ENCODE measurements at regions of chr2 and their contacts with region 1.

Region 1: GRCh38 chr2:19140596-19141219 is 217.7 kb downstream of the OSR1 start:
- DNase-seq: peak; percentile 92 to 98
- ATAC-seq: peak; percentile 98
- H3K4me3 ChIP-seq: no peak overlapping the region
- H3K27ac ChIP-seq: peak overlapping the region; percentile 77 to 91
- H3K4me1 ChIP-seq: peaks cover 59% of the 10 kb centered on the region
- CTCF ChIP-seq: no peak
- EP300 ChIP-seq: peak; percentile 96 to 97
- POLR2A ChIP-seq: no peak
- RAD21 ChIP-seq: peak; percentile 52 to 85

Region 2: DNA sequence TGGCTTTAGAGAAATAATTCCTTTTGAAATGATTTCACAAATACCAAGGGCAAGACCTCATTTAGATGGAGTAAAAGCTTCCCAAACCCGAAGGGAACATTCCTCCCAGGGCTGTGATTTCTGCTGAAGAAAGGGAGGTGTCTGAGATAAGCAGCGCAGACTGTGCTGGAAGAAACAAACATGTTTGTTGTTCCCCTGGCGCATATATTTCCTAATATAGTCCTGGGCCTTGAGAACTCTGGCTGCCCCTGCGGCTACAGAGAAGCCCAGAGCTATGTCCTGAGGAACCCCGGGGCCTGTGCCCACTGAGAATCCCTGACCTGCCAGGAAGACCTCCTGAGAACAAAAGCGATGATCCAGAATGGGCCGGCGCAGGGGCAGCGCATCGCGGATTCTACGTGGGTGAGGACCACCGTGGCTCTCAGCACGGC is 178.7 kb before region 1 on chr2:
- CTCF ChIA-PET with region 1: no interaction called
- POLR2A ChIA-PET with region 1: no interaction called
- DNase-seq: no peak
- ATAC-seq: no peak
- H3K4me3 ChIP-seq: no peak overlapping the region
- H3K27ac ChIP-seq: no peak overlapping the region
- H3K4me1 ChIP-seq: no peaks in the 10 kb centered on the region
- CTCF ChIP-seq: no peak
- EP300 ChIP-seq: no peak
- POLR2A ChIP-seq: no peak
- RAD21 ChIP-seq: no peak

Region 3: GRCh38 chr2:19347619-19348562 is 207.2 kb after region 1 on chr2:
- CTCF ChIA-PET with region 1: no interaction called
- POLR2A ChIA-PET with region 1: interaction called, 15 read pairs
- DNase-seq: peak; percentile 98
- ATAC-seq: peak; percentile 89 to 94
- H3K4me3 ChIP-seq: peak overlapping the region; percentile 75
- H3K27ac ChIP-seq: peak overlapping the region; percentile 91 to 92
- H3K4me1 ChIP-seq: peaks cover 6% of the 10 kb centered on the region; the same call in 1 of the 3 replicates
- CTCF ChIP-seq: no peak
- EP300 ChIP-seq: no peak
- POLR2A ChIP-seq: peak; percentile 99
- RAD21 ChIP-seq: peak in 1 of 2 experiments; percentile 53; a peak in 3 of 5 replicates

Measured in A549 (cell line).